ENCODE measurements at regions of chr15 and their contacts with region 1.

Region 1: DNA sequence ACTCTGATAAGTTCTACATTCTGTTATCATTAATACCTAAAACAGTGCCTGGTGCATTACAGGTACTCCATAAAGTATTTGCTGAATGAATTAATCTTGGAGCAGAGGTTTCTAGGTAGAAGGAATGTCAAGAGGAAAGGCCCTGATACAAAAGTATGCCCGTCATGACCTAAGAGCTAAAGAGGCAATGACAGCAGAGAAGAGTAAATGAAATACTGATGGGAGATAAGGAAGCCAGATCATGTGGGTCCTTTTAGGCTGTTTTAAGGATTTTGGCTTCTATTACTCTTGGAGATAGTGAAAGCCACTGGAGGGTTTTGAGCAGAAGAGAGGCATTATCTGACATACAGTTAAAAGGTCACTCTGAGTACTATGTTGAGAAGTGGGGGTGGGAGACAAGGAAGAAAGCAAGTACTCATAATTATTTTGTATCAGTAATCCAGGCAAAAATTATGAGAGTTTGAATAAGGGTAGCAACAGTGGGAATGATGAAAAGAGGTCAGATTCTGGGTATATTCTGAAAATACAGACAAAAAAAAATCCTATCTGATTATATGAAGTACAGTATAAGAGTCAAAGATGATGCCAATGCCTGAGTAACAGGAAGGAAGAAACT is 48.3 kb downstream of the DENND4A start:
- DNase-seq: no peak
- ATAC-seq: no peak
- H3K4me3 ChIP-seq: no peak overlapping the region
- H3K4me3 Mint-ChIP-seq: no peak overlapping the region
- H3K27ac ChIP-seq: no peak overlapping the region
- H3K27ac Mint-ChIP-seq: no peak overlapping the region
- H3K4me1 ChIP-seq: no peaks in the 10 kb centered on the region
- H3K4me1 Mint-ChIP-seq: peaks cover 11% of the 10 kb centered on the region
- H3K27me3 ChIP-seq: no peaks in the 10 kb centered on the region
- H3K27me3 Mint-ChIP-seq: no peaks in the 10 kb centered on the region
- CTCF ChIP-seq: no peak

Region 2: DNA sequence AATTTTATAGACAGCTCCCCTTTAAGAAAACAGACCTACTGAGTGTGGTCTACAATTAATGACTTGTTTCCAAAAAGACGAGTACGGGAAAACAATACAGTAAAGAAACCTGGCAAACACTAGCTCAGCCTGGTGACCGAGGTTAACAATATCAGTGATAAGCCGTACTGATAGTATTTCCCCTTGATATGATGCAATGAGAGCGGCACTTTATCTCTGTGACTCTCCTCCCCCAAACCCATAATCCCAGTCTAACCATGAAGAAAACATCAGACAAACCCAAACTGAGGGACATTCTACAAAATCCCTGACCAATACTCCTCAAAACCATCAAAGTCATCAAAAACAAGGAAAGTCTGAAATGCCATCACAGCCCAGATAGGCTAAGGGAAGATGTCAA is 40.1 kb after region 1 on chr15:
- CTCF ChIA-PET with region 1: no interaction called
- POLR2A ChIA-PET with region 1: no interaction called
- intact Hi-C with region 1: loop called in 1 of 2 experiments (anchors 5 kb)
- DNase-seq: no peak
- ATAC-seq: no peak
- H3K4me3 ChIP-seq: no peak overlapping the region
- H3K4me3 Mint-ChIP-seq: no peak overlapping the region
- H3K27ac ChIP-seq: no peak overlapping the region
- H3K27ac Mint-ChIP-seq: no peak overlapping the region
- H3K4me1 ChIP-seq: peaks cover 30% of the 10 kb centered on the region
- H3K4me1 Mint-ChIP-seq: peaks cover 27% of the 10 kb centered on the region
- H3K27me3 ChIP-seq: no peaks in the 10 kb centered on the region
- H3K27me3 Mint-ChIP-seq: no peaks in the 10 kb centered on the region
- CTCF ChIP-seq: no peak

Measured in CD4-positive, alpha-beta T cell (primary cell).